ENCODE measurements at regions of chrX and their contacts with region 1.

Region 1: GRCh38 chrX:118536687-118537461 is 41.3 kb downstream of the DOCK11 start:
- DNase-seq: no peak
- ATAC-seq: peak; percentile 70
- H3K4me3 Mint-ChIP-seq: peak overlapping the region; percentile 64
- H3K27ac Mint-ChIP-seq: peak overlapping the region; percentile 82
- H3K4me1 Mint-ChIP-seq: peaks cover 68% of the 10 kb centered on the region
- H3K27me3 Mint-ChIP-seq: no peaks in the 10 kb centered on the region
- CTCF ChIP-seq: no peak

Region 2: DNA sequence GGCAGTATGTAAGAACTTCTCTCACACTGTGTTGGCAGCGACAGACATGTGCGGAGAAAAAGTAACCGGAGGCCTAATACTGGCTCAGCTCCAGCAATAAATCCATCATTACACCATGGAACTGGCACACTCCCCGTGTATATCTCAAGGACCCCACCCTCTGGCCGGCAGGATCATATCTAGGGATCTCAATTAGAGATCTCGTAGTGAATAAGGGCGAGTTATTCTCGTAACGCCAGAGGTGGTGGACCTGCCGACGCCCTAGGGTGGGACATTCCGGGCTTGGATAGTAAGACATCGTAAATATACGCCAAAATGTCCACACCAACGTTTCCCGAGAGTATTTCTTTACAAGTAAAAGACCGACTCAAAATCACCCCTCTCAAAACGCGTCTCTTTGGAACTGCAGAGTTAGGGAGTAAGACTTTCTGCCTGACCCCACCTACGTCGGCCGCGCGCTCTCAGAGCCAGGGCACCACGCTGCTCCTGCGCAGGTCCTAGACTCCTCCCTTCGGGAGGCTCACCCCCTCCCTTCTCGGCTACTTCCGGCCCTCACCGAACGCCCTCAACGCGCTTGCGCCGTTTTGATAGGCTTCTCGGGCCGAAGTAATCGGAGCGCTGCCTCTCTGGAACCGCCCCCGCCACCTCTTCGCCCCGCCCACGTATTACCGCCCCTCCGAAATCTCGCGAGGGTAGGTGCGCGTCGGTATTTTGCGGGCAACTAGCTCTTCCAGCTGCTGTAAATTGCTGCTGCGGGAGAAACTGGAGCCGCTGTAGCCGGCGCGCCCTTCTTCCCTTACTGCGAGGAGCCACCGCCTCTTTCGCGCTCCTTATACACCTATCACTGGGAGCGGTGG is 191.2 kb before region 1 on chrX and contains the start of gene WDR44:
- CTCF ChIA-PET with region 1: no interaction called
- POLR2A ChIA-PET with region 1: no interaction called
- intact Hi-C with region 1: loop called (anchors 5 kb)
- DNase-seq: peak; percentile 82
- ATAC-seq: peak; percentile 89
- H3K4me3 Mint-ChIP-seq: peak within 1 kb of the TSS; percentile 98
- H3K27ac Mint-ChIP-seq: peak within 1 kb of the TSS; percentile 97
- H3K4me1 Mint-ChIP-seq: peaks cover 39% of the 10 kb centered on the region
- H3K27me3 Mint-ChIP-seq: no peaks in the 10 kb centered on the region
- CTCF ChIP-seq: no peak
- total RNA-seq, gene WDR44: 15.3 and 18.7 TPM in 2 replicates

Region 3: DNA sequence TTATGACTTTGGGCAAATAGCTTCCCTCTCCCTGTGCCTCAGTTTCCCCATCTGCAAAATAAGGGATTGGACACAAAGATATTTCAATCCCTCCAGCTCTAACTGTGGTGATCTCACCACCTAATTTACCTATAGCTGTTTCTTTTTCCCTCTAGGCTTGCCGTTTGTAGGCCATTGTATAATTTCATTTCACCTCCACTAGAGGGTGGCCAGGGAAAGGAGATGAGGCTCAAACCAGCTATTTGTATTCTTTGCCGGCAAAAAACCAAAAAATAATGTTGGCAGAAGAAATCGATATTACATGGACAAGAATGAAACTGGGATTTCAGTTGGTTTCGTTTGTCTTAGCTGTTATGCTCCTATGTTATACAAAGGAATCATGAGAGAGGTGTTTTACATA is 77.4 kb before region 1 on chrX:
- CTCF ChIA-PET with region 1: interaction called, 3 read pairs
- POLR2A ChIA-PET with region 1: interaction called, 3 read pairs
- intact Hi-C with region 1: loop called (anchors 1 kb)
- DNase-seq: no peak
- ATAC-seq: peak; percentile 37
- H3K4me3 Mint-ChIP-seq: no peak overlapping the region
- H3K27ac Mint-ChIP-seq: no peak overlapping the region
- H3K4me1 Mint-ChIP-seq: no peaks in the 10 kb centered on the region
- H3K27me3 Mint-ChIP-seq: no peaks in the 10 kb centered on the region
- CTCF ChIP-seq: no peak

Region 4: GRCh38 chrX:118603981-118604380 is 67.1 kb after region 1 on chrX:
- CTCF ChIA-PET with region 1: no interaction called
- POLR2A ChIA-PET with region 1: no interaction called
- intact Hi-C with region 1: loop called (anchors 5 kb)
- DNase-seq: no peak
- ATAC-seq: peak; percentile 62
- H3K4me3 Mint-ChIP-seq: no peak overlapping the region
- H3K27ac Mint-ChIP-seq: peak overlapping the region; percentile 70
- H3K4me1 Mint-ChIP-seq: peaks cover 9% of the 10 kb centered on the region
- H3K27me3 Mint-ChIP-seq: no peaks in the 10 kb centered on the region
- CTCF ChIP-seq: no peak

Measured in activated B cell treated with CpG ODN at 0.5 μM for 24 hours (primary cell).